ENCODE measurements at regions of chr6 and their contacts with region 1.

Region 1: GRCh38 chr6:27157459-27158315 is 89.8 kb upstream of the PRSS16 start:
- DNase-seq: peak; percentile 70
- H3K4me3 Mint-ChIP-seq: peak overlapping the region; percentile 77
- H3K27ac Mint-ChIP-seq: peak overlapping the region; percentile 80
- H3K4me1 Mint-ChIP-seq: peaks cover 47% of the 10 kb centered on the region
- H3K27me3 Mint-ChIP-seq: peaks cover 2% of the 10 kb centered on the region

Region 2: GRCh38 chr6:26613689-26614683 is 543.7 kb before region 1 on chr6:
- intact Hi-C with region 1: no loop called
- DNase-seq: no peak
- H3K4me3 Mint-ChIP-seq: peak overlapping the region; percentile 74
- H3K27ac Mint-ChIP-seq: no peak overlapping the region
- H3K4me1 Mint-ChIP-seq: peaks cover 9% of the 10 kb centered on the region
- H3K27me3 Mint-ChIP-seq: peaks cover 39% of the 10 kb centered on the region

Region 3: DNA sequence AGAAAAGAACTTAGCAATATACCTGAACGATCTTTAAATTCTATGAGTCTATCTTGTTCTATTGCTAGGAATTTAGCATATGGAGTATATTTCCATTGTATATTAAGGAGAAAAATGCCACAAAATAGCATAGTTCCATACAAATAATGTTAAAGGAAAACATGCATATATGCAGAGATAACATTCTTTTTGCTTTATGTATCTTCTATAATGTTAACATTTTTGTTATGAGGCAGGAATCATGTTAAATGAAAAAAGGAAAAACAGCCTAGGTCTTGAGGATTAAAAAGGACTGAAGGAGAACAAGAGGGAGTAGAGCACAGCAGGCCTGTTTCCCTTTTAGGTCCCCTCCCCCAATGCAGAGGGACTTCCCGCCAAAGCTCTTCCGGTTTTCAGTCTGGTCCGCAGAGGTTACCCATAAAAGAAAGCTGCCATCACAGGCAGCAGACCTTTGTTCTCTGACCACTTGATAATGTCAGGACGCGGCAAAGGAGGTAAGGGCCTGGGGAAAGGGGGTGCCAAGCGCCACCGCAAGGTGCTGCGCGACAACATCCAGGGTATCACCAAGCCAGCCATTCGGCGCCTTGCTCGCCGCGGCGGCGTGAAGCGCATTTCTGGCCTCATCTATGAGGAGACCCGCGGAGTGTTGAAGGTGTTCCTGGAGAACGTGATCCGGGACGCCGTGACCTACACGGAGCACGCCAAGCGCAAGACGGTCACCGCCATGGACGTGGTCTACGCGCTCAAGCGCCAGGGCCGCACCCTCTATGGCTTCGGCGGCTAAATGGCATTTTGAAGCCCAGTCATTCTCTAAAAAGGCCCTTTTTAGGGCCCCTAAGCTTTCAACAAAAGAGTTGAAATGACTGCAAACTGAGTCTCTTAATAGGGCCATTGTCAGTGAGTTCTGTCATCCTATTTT is 18.6 kb before region 1 on chr6:
- intact Hi-C with region 1: loop called (anchors 2 kb)
- DNase-seq: peak; percentile 71
- H3K4me3 Mint-ChIP-seq: peak overlapping the region; percentile 96
- H3K27ac Mint-ChIP-seq: peak overlapping the region; percentile 97
- H3K4me1 Mint-ChIP-seq: peaks cover 49% of the 10 kb centered on the region
- H3K27me3 Mint-ChIP-seq: no peaks in the 10 kb centered on the region

Region 4: DNA sequence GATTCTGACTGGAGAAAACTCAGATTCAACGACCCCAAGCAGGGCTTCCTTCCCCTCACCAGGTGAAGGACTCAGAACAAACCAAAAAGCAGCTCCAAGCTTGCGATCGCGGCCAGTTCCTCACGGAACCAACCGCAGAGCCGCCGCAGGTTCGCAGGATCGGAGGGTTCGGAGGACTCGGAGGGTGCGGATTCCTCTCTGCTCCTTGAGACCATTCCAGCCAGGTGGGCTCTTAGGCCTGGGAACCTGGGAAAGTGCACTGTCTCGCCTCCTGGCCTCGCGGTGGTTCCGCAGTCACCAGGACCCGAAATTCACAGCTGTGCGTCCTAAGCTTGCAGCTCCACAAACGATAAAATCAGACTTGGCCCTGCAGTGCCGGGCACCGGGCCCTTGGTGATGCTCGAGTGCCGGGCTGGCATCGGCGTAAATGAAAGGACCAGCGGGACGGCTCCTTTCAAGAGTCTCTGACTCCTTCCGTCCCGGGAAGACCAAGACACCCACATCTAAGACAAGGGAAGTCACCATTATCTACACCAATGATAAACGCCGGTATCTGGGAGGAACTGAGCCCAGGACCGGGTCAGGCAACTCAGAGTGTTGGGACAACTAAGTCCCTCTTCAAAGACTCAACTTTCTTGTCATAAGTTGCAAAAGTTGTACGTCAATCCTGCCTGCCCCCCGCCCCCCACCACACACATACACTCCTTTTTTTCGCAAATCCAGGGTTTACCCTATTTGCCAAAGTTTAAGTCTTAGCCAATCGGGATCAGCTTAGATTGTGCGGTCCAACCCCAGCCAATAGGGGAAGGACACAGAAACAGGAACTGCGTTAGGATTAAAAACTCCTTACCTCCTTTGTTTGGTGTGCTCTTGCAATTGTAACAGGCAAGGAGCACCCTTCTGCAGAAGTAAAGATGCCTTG is 20.1 kb after region 1 on chr6:
- intact Hi-C with region 1: loop called (anchors 1 kb)
- DNase-seq: peak; percentile 66
- H3K4me3 Mint-ChIP-seq: peak overlapping the region; percentile 95
- H3K27ac Mint-ChIP-seq: peak overlapping the region; percentile 93
- H3K4me1 Mint-ChIP-seq: peaks cover 7% of the 10 kb centered on the region
- H3K27me3 Mint-ChIP-seq: peaks cover 36% of the 10 kb centered on the region

Region 5: DNA sequence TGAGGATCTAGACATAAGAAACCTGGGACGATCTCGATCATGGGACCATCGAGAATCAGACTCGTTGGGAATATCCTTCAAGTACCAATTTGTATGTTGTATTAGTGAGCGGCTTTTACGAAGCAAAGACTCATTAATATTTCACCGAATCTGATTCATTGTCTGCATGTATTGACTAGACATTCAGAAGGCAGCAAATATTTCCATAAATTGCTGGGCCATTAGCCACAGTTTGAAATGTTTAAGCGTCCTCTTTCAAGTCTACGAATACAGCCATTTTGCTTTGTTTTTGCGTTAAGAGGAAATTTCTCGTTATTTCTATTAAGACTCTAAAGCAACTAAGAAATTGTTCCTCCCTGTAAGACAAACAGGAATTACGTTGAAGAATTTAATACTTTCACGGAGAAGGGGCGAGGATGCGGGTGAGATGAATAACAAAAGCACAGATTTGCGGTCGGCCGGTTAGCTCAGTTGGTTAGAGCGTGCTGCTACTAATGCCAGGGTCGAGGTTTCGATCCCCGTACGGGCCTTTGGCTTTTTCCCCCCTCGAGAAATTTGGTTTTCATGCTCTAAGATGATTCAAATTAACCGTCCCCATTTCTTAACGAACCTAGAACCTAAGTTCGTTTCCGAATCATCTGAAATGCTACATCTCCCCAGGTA is 135.9 kb after region 1 on chr6:
- intact Hi-C with region 1: no loop called
- DNase-seq: no peak
- H3K4me3 Mint-ChIP-seq: no peak overlapping the region
- H3K27ac Mint-ChIP-seq: no peak overlapping the region
- H3K4me1 Mint-ChIP-seq: peaks cover 2% of the 10 kb centered on the region
- H3K27me3 Mint-ChIP-seq: peaks cover 74% of the 10 kb centered on the region

Region 6: GRCh38 chr6:27494987-27495385 is 337.3 kb after region 1 on chr6:
- intact Hi-C with region 1: no loop called
- DNase-seq: no peak
- H3K4me3 Mint-ChIP-seq: peak overlapping the region; percentile 83
- H3K27ac Mint-ChIP-seq: no peak overlapping the region
- H3K4me1 Mint-ChIP-seq: peaks cover 16% of the 10 kb centered on the region
- H3K27me3 Mint-ChIP-seq: peaks cover 52% of the 10 kb centered on the region

Region 7: GRCh38 chr6:27592481-27593199 is 435.0 kb after region 1 on chr6:
- intact Hi-C with region 1: loop called (anchors 5 kb)
- DNase-seq: peak; percentile 51
- H3K4me3 Mint-ChIP-seq: no peak overlapping the region
- H3K27ac Mint-ChIP-seq: no peak overlapping the region
- H3K4me1 Mint-ChIP-seq: peaks cover 6% of the 10 kb centered on the region
- H3K27me3 Mint-ChIP-seq: peaks cover 24% of the 10 kb centered on the region

Measured in activated T-helper 1 cell treated with anti-CD3 and anti-CD28 coated beads, Interleukin-12 subunit alpha, Interleukin-12 subunit beta, Interleukin-2, Interleukin-4 antibody, amounts not matched to agents 30 ng/mL and 10 ng/mL and 1 ng/mL, durations not matched to agents 14 hours and 24 hours and 36 hours (primary cell).